ENCODE measurements at regions of chr6 and their contacts with region 1.

Region 1: DNA sequence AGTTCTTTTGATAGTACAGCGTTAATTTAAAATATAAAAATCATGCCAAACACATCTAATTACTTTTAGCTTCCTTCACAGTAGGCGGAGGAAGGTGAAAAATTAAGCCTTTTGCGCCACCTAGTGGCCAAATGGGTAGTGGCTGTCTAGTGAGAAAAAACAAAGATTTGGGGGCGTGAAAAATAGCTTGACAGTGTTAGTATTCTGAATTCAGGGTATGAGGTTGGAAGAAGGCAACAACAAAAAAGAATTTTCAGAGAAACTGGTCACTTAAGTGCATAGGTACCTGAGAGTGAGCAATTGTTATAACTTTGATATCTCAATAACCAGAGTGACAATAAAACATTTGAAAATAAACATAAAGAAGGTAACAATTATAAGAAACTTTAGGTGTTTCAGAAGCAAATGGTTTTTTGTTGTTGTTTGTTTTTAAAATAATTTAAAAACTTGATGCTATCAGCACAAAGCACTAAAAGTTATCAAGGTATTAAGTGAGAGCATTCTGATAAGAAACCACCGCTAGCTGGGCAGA is 14.3 kb downstream of the PSMB9 start:
- H3K4me3 ChIP-seq: no peak overlapping the region
- H3K27ac ChIP-seq: no peak overlapping the region
- H3K4me1 ChIP-seq: 0 out of 2 replicates have a peak, but pooled peaks cover 3% of the 10 kb centered on the region
- CTCF ChIP-seq: peak; percentile 63

Region 2: GRCh38 chr6:31945507-31946369 is 922.6 kb before region 1 on chr6 and contains the start of gene CFB:
- CTCF ChIA-PET with region 1: no interaction called
- POLR2A ChIA-PET with region 1: no interaction called
- H3K4me3 ChIP-seq: no peak within 1 kb of the TSS
- H3K27ac ChIP-seq: no peak within 1 kb of the TSS
- H3K4me1 ChIP-seq: peaks cover 1% of the 10 kb centered on the region; the same call in 1 of the 2 replicates
- CTCF ChIP-seq: no peak

Region 3: DNA sequence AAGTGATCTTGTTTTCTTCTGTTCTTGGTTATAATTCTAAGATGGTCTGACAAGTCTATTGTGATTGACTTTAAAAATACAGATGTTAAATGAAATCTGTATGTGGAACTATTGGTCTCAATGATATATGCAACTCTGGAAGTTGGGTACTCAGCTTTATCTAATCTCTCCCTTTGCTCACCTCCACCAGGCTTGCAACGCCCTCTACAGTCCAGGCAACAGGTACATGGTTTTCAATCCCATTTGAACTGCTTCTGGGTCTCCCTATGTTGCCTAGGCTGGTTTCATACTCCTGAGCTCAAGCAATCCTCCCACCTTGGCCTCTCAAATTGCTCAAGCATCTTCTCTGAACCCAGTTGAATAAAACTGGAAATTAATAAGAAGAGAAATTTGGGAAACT is 176.3 kb before region 1 on chr6:
- CTCF ChIA-PET with region 1: interaction called, 10 read pairs
- POLR2A ChIA-PET with region 1: no interaction called
- H3K4me3 ChIP-seq: no peak overlapping the region
- H3K27ac ChIP-seq: no peak overlapping the region
- H3K4me1 ChIP-seq: no peaks in the 10 kb centered on the region
- CTCF ChIP-seq: 0 out of 2 replicates have a peak, but pooled peaks have one; percentile 22

Region 4: DNA sequence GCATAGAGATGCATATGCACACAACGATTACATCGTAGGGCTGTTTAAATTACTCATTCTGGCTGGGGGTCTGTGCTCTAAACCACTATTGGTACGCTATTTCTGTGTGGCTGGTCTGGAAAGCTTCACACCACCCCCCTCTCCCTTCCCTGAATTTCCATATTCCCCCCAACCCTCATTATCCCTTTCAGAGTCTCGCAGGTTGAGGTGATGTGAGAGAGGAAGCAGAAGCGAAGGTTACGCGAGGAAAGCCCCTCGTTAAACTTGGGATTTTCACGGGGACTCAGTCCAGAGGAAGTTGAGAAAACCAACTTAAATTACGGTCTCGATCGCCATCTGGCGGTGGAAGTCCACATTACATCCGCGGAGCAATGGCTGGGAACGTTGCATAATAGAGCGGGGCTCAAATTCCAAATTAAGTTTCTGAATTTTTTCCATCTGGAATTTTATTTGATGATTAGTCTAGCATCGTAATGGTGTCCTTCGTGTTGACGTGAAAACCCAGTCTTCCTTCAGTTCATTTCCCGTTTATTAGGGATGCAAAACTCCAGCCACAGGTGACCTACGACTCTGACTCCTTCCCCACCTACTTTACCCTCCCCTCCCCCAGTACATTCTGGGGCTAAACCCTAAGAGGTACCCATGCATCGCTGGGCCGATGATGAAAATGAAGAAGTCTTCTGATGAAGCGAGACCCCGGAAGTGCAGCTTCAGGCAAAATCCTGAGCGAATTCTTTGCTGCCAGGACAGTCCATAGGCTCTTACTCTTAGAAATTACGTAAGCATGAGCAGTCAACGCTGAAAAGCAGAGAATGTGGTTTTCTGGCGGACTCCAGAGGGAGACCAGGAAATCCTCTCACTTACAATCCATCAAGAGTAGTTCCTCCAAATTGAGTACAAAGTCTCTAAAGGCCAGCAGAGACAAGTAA is 71.2 kb before region 1 on chr6:
- CTCF ChIA-PET with region 1: interaction called, 23 read pairs
- POLR2A ChIA-PET with region 1: no interaction called
- H3K4me3 ChIP-seq: peak overlapping the region; percentile 19
- H3K27ac ChIP-seq: no peak overlapping the region
- H3K4me1 ChIP-seq: no peaks in the 10 kb centered on the region
- CTCF ChIP-seq: peak; percentile 72

Region 5: GRCh38 chr6:32838114-32838958 is 30.0 kb before region 1 on chr6 and contains the start of gene TAP2:
- CTCF ChIA-PET with region 1: interaction called, 355 read pairs
- POLR2A ChIA-PET with region 1: interaction called, 21 read pairs
- H3K4me3 ChIP-seq: peak within 1 kb of the TSS; percentile 87
- H3K27ac ChIP-seq: peak within 1 kb of the TSS; percentile 67
- H3K4me1 ChIP-seq: 0 out of 2 replicates have a peak, but pooled peaks cover 3% of the 10 kb centered on the region
- CTCF ChIP-seq: peak; percentile 96

Region 6: DNA sequence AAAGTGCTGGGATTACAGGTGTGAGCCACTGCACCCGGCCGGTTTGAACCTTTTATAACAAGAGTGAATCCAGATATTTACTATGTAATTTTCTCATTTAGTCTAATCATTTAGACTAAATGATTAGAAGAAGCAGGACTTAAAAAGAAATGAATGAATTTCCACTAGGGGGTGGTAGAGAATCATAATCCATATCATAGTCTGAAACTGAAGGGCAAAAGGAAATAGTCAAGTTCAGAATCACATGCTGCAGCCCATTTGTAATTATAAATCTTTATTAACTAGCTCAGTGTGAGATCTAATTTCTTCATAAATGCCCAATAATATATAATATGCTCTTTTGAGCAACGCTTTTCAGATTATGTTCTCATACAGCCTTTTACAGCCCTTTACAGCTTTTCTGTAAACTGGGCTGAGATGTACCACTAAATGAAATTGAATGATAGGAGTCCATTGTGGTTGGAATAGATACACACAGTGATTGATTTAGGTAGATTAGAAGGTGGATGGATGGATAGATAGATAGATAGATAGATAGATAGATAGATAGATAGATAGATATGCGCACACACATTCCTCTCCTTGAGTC is 17.5 kb after region 1 on chr6:
- CTCF ChIA-PET with region 1: interaction called, 43 read pairs
- POLR2A ChIA-PET with region 1: no interaction called
- H3K4me3 ChIP-seq: no peak overlapping the region
- H3K27ac ChIP-seq: no peak overlapping the region
- H3K4me1 ChIP-seq: peaks cover 4% of the 10 kb centered on the region
- CTCF ChIP-seq: peak; percentile 28